Left ventricle myocardium inferior (tissue), 1 donor: ENCODE measurements at regions of chr5 and their contacts with region 1.

Region 1: GRCh38 chr5:142881076-142881783 is 111.1 kb downstream of the ARHGAP26 start:
- DNase-seq: no peak
- H3K4me3 ChIP-seq: no peak overlapping the region
- H3K27ac ChIP-seq: peak overlapping the region; percentile 81
- H3K4me1 ChIP-seq: peaks cover 78% of the 10 kb centered on the region
- H3K27me3 ChIP-seq: no peaks in the 10 kb centered on the region
- CTCF ChIP-seq: no peak

Region 2: DNA sequence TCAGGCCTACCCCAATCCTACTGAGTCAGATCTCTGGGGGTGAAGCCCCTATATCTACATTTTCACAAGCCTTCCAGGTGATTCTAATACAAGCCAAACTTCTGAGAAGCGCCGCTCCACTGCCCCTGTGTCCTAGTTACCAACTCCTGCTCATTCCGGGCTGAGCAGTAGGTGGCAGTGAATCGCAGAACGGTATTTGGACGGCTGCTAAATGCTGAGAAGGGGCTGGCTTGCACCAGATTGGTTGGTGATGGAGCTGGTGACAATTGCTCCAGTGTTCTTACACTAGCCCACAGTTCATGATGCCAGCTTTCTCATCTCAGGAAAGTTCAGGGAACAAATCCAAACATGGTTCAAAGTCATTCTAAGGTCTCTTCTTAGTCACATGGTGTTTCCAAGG is 164.3 kb before region 1 on chr5:
- intact Hi-C with region 1: loop called (anchors 2 kb)
- DNase-seq: peak; percentile 61
- H3K4me3 ChIP-seq: peak overlapping the region; percentile 51
- H3K27ac ChIP-seq: peak overlapping the region; percentile 87
- H3K4me1 ChIP-seq: peaks cover 63% of the 10 kb centered on the region
- H3K27me3 ChIP-seq: no peaks in the 10 kb centered on the region
- CTCF ChIP-seq: peak; percentile 53

Region 3: GRCh38 chr5:142748568-142749249 is 132.5 kb before region 1 on chr5:
- intact Hi-C with region 1: no loop called
- DNase-seq: peak; percentile 29
- H3K4me3 ChIP-seq: no peak overlapping the region
- H3K27ac ChIP-seq: peak overlapping the region; percentile 88
- H3K4me1 ChIP-seq: peaks cover 92% of the 10 kb centered on the region
- H3K27me3 ChIP-seq: no peaks in the 10 kb centered on the region
- CTCF ChIP-seq: peak; percentile 66